ENCODE measurements at regions of chr16 and their contacts with region 1.

Region 1: DNA sequence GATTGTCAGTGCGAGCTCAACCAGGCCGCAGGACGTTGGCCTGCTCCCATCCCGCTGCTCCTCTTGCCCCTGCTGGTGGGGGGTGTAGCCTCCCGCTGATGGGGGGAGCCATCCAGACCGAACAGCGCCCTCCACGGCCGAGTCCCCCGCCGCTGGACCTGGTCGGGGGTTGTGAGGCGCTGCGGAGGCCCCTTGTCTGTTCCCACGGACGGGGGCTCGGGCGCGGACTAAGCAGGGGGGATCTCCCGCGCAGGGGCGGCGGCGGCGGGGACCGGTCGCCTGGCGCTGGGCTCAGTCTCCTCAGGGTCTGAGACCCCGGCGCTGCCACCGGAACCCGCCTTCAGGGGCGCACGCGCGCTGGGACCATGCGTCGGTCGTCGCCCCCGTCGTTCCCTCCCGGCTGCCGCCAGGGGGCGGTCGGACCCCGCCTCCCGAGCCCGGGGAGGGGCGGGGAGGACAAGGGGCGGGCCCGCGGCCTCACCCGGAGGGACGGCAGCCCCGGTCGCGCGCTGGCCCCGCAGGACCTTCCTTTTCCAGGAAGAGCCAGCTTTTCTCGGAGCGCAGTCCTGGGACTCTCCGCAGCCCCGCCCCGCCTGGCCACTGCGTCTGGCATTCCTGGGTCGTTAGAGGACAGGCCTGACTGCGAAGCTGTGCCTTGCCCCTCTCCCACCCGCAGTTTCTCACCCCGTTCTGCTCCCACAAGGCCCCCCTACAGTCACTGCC is 6.3 kb upstream of the IL32 start:
- DNase-seq: peak; percentile 86
- H3K4me3 Mint-ChIP-seq: peak overlapping the region; percentile 86
- H3K27ac Mint-ChIP-seq: peak overlapping the region; percentile 89
- H3K4me1 Mint-ChIP-seq: peaks cover 60% of the 10 kb centered on the region
- H3K27me3 Mint-ChIP-seq: no peaks in the 10 kb centered on the region

Region 2: GRCh38 chr16:3074860-3075522 is 15.8 kb after region 1 on chr16:
- intact Hi-C with region 1: loop called (anchors 2 kb)
- DNase-seq: peak; percentile 90
- H3K4me3 Mint-ChIP-seq: peak overlapping the region; percentile 81
- H3K27ac Mint-ChIP-seq: peak overlapping the region; percentile 100
- H3K4me1 Mint-ChIP-seq: peaks cover 75% of the 10 kb centered on the region
- H3K27me3 Mint-ChIP-seq: no peaks in the 10 kb centered on the region

Region 3: GRCh38 chr16:3087243-3088235 is 28.4 kb after region 1 on chr16:
- intact Hi-C with region 1: no loop called
- DNase-seq: no peak
- H3K4me3 Mint-ChIP-seq: peak overlapping the region; percentile 68
- H3K27ac Mint-ChIP-seq: peak overlapping the region; percentile 67
- H3K4me1 Mint-ChIP-seq: peaks cover 36% of the 10 kb centered on the region
- H3K27me3 Mint-ChIP-seq: no peaks in the 10 kb centered on the region

Region 4: DNA sequence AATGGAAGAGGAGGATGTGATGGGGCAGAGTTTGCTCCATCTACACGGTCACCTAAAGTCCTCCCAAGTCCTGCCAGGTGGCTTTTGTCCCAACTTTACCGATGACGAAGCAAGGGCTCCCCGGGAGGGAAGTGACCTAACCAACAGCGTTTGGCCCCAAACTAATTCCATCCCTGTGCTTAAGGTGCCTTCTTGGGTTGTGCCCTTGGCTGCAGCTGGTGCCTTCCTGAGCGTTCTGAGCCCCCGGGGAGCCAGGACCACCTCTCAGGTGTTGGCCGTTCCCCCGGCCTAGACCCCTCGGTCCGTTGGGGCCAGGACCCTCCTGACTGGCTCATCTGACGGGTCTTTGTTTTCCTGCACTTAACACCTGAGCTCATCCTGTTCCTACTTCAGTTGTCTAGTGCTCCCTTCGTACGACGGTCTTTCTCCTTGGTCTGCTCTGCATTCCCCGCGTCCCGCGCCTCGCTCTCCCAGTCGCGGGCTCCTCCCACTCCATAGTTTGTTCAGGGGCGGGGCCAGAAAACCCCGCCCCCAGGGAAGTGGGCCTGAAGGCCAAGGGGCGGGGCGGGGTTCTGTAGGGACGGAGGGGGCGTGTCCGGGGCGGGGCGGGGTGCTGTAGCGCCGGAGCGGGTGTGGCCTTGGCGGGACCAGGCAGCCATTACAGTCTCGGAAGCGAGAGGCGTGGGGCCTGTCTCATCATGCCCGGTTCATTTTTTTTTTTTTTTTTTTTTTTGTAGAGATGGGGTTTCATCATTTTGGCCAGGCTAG is 40.8 kb after region 1 on chr16:
- intact Hi-C with region 1: loop called (anchors 2 kb)
- DNase-seq: peak; percentile 86
- H3K4me3 Mint-ChIP-seq: peak overlapping the region; percentile 69
- H3K27ac Mint-ChIP-seq: peak overlapping the region; percentile 47
- H3K4me1 Mint-ChIP-seq: peaks cover 29% of the 10 kb centered on the region
- H3K27me3 Mint-ChIP-seq: peaks cover 4% of the 10 kb centered on the region

Region 5: DNA sequence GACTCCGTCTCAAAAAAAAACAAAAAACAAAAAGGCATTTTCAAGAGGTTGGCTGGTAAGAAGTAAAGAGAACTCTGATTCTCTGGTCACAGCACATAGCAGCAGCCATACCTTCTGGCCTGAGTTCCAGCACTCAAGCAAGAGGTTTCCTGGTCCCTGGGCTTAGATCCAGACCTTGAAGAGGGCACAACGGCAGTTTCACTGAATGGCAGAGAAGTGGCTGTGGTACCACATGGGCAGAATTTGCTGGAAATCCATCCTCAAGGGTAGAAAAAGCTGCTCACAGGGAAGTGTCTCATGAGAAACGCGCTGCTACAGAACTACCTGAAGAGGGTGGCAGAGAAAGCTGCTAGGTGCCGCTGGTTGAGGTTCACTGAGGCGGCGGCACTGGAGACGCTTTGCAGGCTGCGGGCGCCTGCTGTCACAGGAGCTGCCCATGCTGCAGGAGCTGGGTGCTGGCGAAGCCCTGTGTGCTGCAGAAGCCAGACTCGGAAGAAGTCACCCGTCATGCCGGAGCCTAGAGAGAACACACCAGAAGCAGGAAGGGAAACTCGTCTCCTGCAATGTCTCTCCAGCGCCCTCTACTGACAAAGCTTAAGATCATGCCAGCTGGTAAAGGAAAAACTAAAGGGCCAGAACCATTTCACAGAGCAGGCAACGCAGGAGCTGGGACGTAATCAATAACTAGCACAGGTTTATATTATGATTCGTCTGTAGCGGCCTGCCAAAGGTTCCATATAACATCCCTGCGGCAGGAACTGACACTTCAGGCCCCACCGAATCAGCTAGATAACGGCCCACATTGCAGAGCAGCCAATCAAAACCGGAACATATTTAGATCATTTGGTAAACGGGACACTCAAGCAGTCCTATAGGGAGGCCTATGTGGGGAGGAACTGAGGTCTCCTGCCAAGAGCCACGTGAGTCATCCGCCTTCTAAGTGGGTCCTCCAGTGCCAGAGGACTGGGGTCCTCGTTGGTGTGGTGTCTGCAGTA is 70.3 kb after region 1 on chr16:
- intact Hi-C with region 1: loop called (anchors 1 kb)
- DNase-seq: peak; percentile 81
- H3K4me3 Mint-ChIP-seq: peak overlapping the region; percentile 87
- H3K27ac Mint-ChIP-seq: peak overlapping the region; percentile 80
- H3K4me1 Mint-ChIP-seq: peaks cover 46% of the 10 kb centered on the region
- H3K27me3 Mint-ChIP-seq: no peaks in the 10 kb centered on the region

Region 6: DNA sequence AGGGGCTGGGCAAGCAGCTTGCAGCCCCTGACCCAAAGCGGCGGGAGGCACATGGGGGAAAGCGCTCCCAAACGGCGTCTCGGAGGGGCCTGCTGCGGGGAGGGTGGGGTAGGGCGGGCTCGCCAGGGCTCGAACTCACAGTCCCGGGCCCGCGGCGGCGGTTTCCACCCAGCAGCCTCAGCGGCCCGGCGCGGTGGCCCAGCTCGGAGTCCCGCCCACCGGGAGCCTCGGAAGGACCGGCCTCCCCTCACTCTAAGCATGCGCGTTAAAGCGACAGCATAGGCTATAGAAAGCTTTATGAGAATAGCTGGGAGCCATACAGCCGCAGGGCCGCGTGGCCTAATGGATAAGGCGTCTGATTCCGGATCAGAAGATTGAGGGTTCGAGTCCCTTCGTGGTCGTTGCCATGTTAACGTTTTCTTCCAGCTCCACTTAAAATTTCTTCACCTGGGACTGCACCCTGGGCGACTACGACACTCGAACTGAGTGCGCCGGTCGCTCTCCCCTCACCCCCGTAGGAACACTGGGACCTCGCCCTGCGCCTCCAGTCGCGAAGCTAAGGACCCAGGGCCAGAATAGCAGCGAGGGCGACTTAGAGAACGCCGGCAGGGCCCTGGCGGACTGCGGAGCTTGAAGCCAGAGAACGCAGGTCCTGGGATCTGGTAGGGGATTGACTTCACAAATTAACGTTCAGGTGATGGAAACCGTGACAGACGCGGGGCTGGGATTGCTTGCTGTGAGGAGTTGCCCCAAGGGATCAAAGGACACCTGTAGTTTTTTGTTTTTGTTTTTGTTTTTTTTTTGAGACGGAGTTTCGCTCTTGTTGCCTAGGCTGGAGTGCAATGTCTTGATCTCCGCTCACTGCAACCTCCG is 91.4 kb after region 1 on chr16:
- intact Hi-C with region 1: loop called (anchors 5 kb)
- DNase-seq: peak; percentile 96
- H3K4me3 Mint-ChIP-seq: peak overlapping the region; percentile 85
- H3K27ac Mint-ChIP-seq: peak overlapping the region; percentile 82
- H3K4me1 Mint-ChIP-seq: peaks cover 30% of the 10 kb centered on the region
- H3K27me3 Mint-ChIP-seq: peaks cover 14% of the 10 kb centered on the region

Region 7: GRCh38 chr16:3509470-3509928 is 450.3 kb after region 1 on chr16:
- intact Hi-C with region 1: loop called (anchors 10 kb)
- DNase-seq: peak; percentile 59
- H3K4me3 Mint-ChIP-seq: no peak overlapping the region
- H3K27ac Mint-ChIP-seq: peak overlapping the region; percentile 74
- H3K4me1 Mint-ChIP-seq: peaks cover 52% of the 10 kb centered on the region
- H3K27me3 Mint-ChIP-seq: no peaks in the 10 kb centered on the region

Measured in activated T-helper 2 cell treated with anti-CD3 and anti-CD28 coated beads, Interferon-gamma antibody, Interleukin-2, Interleukin-4, amounts not matched to agents 10 μg/mL and 5 μg/mL and 100 μg/mL, durations not matched to agents 14 hours and 24 hours and 36 hours (primary cell).